Calu3 (cell line): ENCODE measurements at regions of chr1 and their contacts with region 1.

Region 1: GRCh38 chr1:9874959-9875635 is 35.0 kb downstream of the CTNNBIP1 start:
- DNase-seq: peak; percentile 65
- H3K4me3 Mint-ChIP-seq: no peak overlapping the region
- H3K27ac Mint-ChIP-seq: no peak overlapping the region
- H3K4me1 Mint-ChIP-seq: peaks cover 6% of the 10 kb centered on the region
- H3K27me3 Mint-ChIP-seq: no peaks in the 10 kb centered on the region
- CTCF ChIP-seq: peak; percentile 84

Region 2: DNA sequence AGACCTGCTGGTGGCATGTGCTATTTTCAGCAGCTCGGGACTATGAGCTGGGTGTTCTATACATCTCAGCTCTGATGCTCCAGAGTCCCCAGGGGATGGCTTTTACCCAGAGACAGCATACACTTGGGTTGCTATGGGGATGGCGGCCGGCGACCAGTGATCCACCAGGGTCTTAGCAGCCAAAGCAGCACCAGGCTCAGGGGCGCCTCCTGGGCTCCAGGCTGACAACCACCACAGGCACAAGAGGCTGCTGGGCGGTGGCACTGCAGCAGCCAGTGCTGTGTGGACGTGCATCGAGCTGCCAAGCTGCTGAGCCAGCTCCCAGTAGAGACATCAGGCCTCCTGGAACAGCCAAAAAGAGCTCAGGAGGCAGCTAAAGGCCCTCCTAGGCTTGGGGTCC is 13.7 kb before region 1 on chr1:
- CTCF ChIA-PET with region 1: no interaction called
- intact Hi-C with region 1: no loop called
- DNase-seq: no peak
- H3K4me3 Mint-ChIP-seq: no peak overlapping the region
- H3K27ac Mint-ChIP-seq: no peak overlapping the region
- H3K4me1 Mint-ChIP-seq: no peaks in the 10 kb centered on the region
- H3K27me3 Mint-ChIP-seq: no peaks in the 10 kb centered on the region
- CTCF ChIP-seq: no peak

Region 3: DNA sequence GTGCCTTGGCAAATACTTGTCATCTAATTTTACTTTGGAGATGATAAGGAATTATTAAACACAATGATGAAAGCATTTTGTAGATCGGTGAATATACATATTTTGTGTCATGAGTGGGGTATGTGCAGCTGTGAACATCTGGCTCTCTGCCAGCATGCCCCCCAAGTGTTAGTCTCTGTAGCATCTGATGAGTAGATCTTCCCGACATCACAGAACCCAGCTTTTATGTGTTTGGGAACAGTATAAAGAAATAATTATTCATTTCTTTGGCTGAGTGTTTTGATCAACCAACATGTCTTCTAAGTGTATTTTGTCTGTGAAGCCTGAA is 39.5 kb after region 1 on chr1:
- CTCF ChIA-PET with region 1: interaction called, 11 read pairs
- intact Hi-C with region 1: loop called (anchors 1 kb)
- DNase-seq: no peak
- H3K4me3 Mint-ChIP-seq: no peak overlapping the region
- H3K27ac Mint-ChIP-seq: no peak overlapping the region
- H3K4me1 Mint-ChIP-seq: peaks cover 21% of the 10 kb centered on the region
- H3K27me3 Mint-ChIP-seq: peaks cover 14% of the 10 kb centered on the region
- CTCF ChIP-seq: no peak

Region 4: DNA sequence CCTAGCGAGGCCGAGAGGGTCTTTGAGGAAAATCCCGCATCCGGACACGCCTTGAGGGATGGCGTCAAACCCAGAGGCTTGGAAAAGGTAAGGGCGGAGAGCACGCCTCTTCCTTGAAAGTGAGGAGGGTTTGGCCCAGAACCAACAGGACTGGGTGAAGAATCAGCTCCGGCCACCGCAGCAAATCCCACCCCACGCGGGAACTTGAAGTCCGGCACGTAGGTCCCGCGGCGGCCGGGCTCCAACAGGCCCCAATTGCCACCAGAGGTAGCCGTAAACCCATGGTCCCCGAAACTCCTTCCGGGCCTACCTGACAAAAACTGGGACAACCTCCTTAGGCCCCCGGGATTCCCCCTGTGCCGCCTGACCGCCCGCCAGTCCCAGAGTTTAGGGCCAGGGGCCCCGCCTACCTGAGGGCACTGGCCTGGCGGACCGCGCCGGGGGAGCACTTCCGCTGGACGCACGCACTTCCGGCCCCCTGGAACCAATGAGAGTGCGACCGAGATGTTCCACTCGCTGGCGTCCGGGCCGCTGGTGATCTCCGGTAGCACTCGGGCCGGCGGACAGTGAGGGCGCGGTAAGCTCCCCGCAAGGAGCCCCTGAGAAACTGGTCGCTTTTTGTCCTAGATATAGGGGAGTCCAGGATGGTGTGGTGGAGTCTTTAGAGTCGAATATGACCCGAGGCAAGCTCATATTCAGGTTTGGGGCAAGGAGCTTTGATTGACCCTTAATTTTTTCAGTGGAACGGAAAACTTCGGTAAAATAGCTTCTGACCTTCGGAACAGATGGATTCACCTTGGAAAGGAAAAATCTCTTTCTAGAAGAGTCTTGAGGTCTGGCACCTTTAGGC is 68.1 kb after region 1 on chr1 and contains the starts of genes LZIC and NMNAT1:
- CTCF ChIA-PET with region 1: interaction called, 3 read pairs
- intact Hi-C with region 1: loop called (anchors 5 kb)
- DNase-seq: peak; percentile 90
- H3K4me3 Mint-ChIP-seq: peak within 1 kb of the TSS; percentile 93
- H3K27ac Mint-ChIP-seq: peak within 1 kb of the TSS; percentile 88
- H3K4me1 Mint-ChIP-seq: no peaks in the 10 kb centered on the region
- H3K27me3 Mint-ChIP-seq: no peaks in the 10 kb centered on the region
- CTCF ChIP-seq: no peak
- total RNA-seq, gene LZIC: 19.8 and 22.6 TPM in 2 replicates
- total RNA-seq, gene NMNAT1: 5.3 and 5.7 TPM in 2 replicates

Region 5: DNA sequence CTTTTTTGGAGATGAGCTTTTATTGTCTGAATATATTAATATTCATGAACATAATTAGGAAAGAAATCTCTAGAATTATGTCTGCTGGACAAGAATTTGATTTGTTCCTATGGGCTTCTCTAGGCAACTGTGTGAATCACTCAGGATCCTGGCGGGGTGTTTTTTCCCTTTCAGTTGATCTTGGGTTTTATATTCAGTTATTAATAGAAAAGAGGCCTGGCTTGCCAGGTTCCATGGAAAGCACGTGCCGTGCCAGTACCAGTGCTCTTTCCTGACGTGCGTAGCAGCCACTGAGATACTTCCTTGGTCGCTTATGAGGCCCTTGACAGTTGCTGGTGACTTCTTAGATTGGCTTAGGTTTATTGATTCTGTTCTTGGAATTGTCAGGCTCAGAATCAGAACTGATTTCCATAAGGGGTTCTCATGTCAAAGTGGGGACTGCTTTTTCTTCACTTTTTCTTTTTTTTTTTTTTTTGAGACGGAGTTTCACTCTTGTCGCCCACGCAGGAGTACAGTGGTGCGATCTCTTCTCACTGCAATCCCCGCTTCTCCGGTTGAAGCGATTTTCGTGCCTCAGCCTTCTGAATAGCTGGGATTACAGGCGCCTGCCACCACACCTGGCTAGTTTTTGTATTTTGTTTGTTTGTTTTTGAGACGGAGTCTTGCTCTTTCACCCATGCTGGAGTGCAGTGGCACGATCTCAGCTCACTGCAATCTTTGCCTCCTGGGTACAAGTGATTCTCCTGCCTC is 286.6 kb after region 1 on chr1:
- CTCF ChIA-PET with region 1: no interaction called
- intact Hi-C with region 1: no loop called
- DNase-seq: no peak
- H3K4me3 Mint-ChIP-seq: no peak overlapping the region
- H3K27ac Mint-ChIP-seq: no peak overlapping the region
- H3K4me1 Mint-ChIP-seq: no peaks in the 10 kb centered on the region
- H3K27me3 Mint-ChIP-seq: no peaks in the 10 kb centered on the region
- CTCF ChIP-seq: no peak